ENCODE measurements at regions of chr11 and their contacts with region 1.

Region 1: DNA sequence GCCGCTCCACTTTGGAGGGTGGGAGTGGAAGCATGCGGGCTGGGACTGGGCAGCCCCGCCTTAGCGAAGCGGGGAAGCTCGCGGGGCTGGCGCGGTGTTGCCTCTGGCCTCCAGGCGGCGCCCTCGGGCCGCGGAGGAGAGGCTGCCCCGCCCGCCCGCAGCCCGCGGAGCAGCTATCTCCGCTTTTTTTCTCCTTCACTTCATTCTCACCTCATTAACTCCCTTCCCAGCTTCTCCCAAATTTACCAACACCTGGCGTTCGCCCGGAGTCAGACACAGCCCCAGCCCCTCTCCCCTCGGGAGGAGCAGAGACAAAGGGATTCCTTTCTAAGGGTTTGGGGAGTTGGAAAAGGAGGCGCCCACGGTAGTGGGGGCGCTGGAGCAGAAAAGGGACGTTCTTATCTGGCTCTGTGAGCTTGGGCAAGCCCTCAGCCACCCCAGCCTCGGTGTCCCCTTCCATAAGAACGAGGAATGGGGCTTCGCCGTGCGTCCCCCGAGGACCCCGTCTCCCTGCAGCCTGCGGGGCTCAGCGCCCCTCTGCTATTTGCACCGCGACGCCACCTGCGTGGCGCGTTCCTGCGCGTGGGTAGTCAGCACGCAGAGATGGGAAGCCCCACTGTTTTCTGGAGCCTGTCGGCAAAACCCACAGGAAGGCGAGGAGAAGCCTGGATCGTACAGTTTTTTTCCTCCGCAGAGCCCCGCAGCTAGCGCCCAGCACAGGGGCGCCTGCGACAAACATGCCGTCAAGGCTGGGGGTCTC is 1.5 kb upstream of the WNT11 start:
- DNase-seq: peak in 1 of 2 donors; percentile 85
- H3K4me3 ChIP-seq: peak overlapping the region; percentile 70 to 76
- H3K27ac ChIP-seq: no peak overlapping the region
- H3K4me1 ChIP-seq: peaks cover 17 to 36% of the 10 kb centered on the region in 2 donors
- H3K27me3 ChIP-seq: peaks cover 3% of the 10 kb centered on the region
- CTCF ChIP-seq: peak; percentile 93 to 98 (median 94)

Region 2: DNA sequence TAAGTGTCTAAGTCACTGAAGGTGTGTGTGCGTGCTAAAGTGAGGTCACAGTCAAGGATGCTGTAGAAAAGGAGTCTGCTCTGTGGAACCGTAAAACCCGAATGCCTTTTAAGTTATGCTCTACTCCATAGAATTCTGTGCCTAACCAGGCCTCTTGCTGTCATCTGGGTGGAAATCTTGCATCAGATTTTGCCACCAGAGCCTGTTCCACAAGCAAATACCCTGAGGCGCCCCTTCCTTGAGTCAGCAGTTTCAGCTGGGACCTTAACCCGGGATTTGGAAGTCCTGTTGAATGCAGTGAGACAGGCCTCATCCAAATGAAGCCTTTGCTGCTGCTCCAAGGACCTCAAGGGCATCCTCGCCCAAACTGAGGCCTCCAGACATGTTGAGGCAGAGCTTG is 111.3 kb before region 1 on chr11:
- intact Hi-C with region 1: no loop called
- DNase-seq: no peak
- H3K4me3 ChIP-seq: no peak overlapping the region
- H3K27ac ChIP-seq: no peak overlapping the region
- H3K4me1 ChIP-seq: no peaks in the 10 kb centered on the region
- H3K27me3 ChIP-seq: no peaks in the 10 kb centered on the region
- CTCF ChIP-seq: no peak

Region 3: GRCh38 chr11:76318744-76319384 is 111.0 kb after region 1 on chr11:
- intact Hi-C with region 1: loop called (anchors 1 kb)
- DNase-seq: peak in 1 of 2 donors; percentile 87
- H3K4me3 ChIP-seq: no peak overlapping the region
- H3K27ac ChIP-seq: no peak overlapping the region
- H3K4me1 ChIP-seq: no peaks in the 10 kb centered on the region
- H3K27me3 ChIP-seq: no peaks in the 10 kb centered on the region
- CTCF ChIP-seq: peak; percentile 83 to 93 (median 90)

Region 4: DNA sequence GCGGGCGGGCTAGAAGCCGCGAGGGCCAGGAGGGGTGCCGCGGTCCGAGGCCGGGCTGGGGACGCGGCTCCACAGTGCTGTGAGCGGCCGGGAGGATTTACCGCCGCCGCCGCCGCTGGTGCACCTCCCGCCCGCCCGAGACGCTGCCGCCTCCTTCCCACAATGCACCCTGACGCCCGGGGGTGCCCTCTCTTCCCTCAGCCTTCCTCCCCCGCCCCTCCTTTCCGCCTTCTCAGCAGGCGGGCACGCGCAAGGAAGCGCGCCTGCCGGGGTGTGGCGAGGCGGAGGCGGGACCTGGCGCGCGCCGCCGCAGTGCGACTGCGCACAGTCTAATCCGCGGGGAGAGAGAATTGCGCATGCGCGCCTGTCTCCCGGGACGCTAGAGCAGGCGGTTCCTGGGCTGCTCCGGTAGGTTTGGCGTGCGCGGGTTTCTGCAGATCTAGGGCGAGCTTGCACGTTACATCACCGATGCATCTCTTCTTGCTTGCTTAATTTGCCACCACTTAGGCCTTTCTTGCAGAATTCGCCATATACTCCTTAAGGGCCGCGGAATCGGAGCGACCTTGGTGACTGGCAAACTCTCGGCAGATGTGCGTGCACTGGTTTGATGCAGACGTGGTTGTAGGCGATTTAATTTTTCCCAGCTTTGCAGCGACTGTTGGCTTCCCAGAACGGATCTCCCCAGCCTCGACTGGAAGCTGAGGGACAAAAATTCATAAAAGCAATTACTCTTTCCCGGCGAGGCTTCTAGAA is 173.3 kb after region 1 on chr11 and contains the starts of genes GVQW3 and THAP12:
- intact Hi-C with region 1: loop called (anchors 5 kb)
- DNase-seq: peak; percentile 88 to 99
- H3K4me3 ChIP-seq: peak within 1 kb of the TSS; percentile 89 to 98
- H3K27ac ChIP-seq: peak within 1 kb of the TSS; percentile 73 to 84
- H3K4me1 ChIP-seq: peaks cover 0 to 21% of the 10 kb centered on the region in 2 donors
- H3K27me3 ChIP-seq: no peaks in the 10 kb centered on the region
- CTCF ChIP-seq: peak in 2 of 3 experiments; percentile 19 to 26
- total RNA-seq, gene GVQW3: not detected
- total RNA-seq, gene THAP12: 12.7 TPM

Region 5: GRCh38 chr11:76444384-76445123 is 236.7 kb after region 1 on chr11 and contains the start of gene EMSY:
- intact Hi-C with region 1: loop called (anchors 1 kb)
- DNase-seq: peak; percentile 89 to 99
- H3K4me3 ChIP-seq: peak within 1 kb of the TSS; percentile 87 to 90
- H3K27ac ChIP-seq: peak within 1 kb of the TSS; percentile 90 to 93
- H3K4me1 ChIP-seq: peaks cover 8 to 15% of the 10 kb centered on the region in 2 donors
- H3K27me3 ChIP-seq: no peaks in the 10 kb centered on the region
- CTCF ChIP-seq: no peak
- total RNA-seq, gene EMSY: 7.5 TPM

Region 6: DNA sequence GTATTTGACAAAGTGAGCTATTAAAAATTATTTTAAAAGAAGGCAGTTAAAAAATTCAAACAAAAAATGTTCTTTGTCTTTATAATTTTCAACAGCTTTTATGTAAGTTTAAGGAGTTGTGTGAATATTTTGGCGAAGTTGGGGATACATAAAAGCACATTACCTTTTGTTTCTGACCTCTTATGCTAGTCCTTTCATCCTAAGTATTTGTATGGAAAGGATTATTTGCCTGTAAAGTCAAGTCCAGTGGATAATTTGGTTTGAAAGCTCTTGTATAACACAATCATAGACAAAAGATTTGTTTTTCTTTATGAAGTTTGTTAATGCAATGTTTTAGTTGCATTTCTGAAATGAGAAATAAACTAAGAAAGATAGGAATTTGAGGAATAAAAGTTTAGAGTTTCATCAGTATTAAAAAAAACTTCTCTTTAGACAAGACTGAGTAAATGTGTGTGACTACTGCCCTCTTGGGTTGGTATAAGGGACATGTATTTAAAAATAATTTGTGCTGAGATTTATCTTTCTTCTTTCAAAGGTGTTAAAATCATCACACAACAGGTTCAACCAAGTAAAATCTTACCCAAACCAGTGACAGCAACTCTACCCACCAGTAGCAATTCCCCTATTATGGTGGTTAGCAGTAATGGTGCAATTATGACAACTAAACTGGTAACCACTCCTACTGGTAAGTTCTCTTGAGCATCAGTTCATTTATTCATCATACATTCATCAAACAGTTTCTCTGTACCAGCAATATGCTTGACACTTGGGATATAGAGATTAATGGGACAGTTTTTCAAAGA is 305.2 kb after region 1 on chr11:
- intact Hi-C with region 1: loop called (anchors 2 kb)
- DNase-seq: no peak
- H3K4me3 ChIP-seq: no peak overlapping the region
- H3K27ac ChIP-seq: no peak overlapping the region
- H3K4me1 ChIP-seq: peaks cover 0 to 10% of the 10 kb centered on the region in 2 donors
- H3K27me3 ChIP-seq: no peaks in the 10 kb centered on the region
- CTCF ChIP-seq: peak in 2 of 3 experiments; percentile 44 to 52

Measured in ascending aorta (tissue), 2 donors.